Thyroid gland (tissue), 4 donors: ENCODE measurements at regions of chr19 and their contacts with region 1.

Region 1: DNA sequence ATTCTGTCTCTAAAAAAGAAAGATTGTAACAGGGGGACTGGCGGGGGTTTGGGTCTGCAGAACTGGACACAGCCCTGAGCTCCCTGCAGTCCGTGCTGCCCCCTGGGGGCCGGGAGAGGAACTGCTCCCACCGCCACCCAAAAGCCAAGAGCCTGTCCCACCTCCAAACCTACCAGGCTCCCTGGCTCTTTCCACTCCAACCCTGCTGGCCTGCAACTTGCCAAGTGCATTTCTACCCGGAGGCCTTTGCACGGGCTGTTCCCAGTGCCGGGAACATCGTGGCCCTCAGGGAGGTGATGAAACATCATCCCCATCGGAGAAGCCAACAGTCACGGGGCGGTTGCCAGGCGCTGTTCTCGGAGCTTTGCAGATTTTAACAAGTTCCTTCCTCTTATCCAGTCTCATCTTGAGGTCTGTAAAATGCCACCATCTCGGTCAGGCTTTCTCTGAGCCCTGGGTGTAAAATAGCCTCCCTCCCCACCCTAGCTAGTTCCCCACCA is 50.7 kb downstream of the SMIM24 start:
- DNase-seq: peak; percentile 79
- H3K4me3 ChIP-seq: no peak overlapping the region
- H3K27ac ChIP-seq: peak overlapping the region; percentile 45 to 79 (median 66)
- H3K4me1 ChIP-seq: peaks cover 3 to 34% of the 10 kb centered on the region in 2 donors
- H3K27me3 ChIP-seq: no peaks in the 10 kb centered on the region
- CTCF ChIP-seq: peak; percentile 92 to 98 (median 97)
- POLR2A ChIP-seq: peak in 1 of 2 donors; percentile 9

Region 2: DNA sequence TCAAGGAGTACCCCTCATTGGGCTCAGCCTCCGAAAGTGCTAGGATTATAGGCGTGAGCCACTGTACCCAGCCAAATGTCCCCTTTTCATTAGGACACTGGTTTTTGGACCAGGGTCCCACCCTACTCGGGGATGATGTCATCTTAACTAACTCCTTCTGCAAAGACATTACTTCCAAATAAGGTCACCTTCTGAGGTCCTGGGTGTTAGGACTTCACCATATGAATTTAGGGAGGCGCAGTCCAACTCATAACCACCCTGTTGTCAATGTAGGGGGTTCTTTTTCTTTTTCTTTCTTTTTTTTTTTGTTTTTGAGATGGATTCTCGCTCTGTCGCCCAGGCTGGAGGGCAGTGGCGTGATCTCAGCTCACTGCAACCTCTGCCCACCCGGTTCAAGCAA is 96.0 kb before region 1 on chr19:
- intact Hi-C with region 1: loop called (anchors 5 kb)
- DNase-seq: no peak
- H3K4me3 ChIP-seq: no peak overlapping the region
- H3K27ac ChIP-seq: peak overlapping the region in 1 of 3 donors; percentile 26
- H3K4me1 ChIP-seq: peaks cover 34 to 55% of the 10 kb centered on the region in 2 donors
- H3K27me3 ChIP-seq: no peaks in the 10 kb centered on the region
- CTCF ChIP-seq: no peak
- POLR2A ChIP-seq: no peak

Region 3: GRCh38 chr19:3403489-3404323 is 25.9 kb before region 1 on chr19:
- intact Hi-C with region 1: loop called (anchors 2 kb)
- DNase-seq: peak; percentile 96 to 97
- H3K4me3 ChIP-seq: peak overlapping the region in 1 of 3 donors; percentile 9
- H3K27ac ChIP-seq: peak overlapping the region; percentile 99 to 100 (median 100)
- H3K4me1 ChIP-seq: peaks cover 58 to 78% of the 10 kb centered on the region in 2 donors
- H3K27me3 ChIP-seq: no peaks in the 10 kb centered on the region
- CTCF ChIP-seq: no peak
- POLR2A ChIP-seq: peak in 1 of 2 donors; percentile 28

Region 4: DNA sequence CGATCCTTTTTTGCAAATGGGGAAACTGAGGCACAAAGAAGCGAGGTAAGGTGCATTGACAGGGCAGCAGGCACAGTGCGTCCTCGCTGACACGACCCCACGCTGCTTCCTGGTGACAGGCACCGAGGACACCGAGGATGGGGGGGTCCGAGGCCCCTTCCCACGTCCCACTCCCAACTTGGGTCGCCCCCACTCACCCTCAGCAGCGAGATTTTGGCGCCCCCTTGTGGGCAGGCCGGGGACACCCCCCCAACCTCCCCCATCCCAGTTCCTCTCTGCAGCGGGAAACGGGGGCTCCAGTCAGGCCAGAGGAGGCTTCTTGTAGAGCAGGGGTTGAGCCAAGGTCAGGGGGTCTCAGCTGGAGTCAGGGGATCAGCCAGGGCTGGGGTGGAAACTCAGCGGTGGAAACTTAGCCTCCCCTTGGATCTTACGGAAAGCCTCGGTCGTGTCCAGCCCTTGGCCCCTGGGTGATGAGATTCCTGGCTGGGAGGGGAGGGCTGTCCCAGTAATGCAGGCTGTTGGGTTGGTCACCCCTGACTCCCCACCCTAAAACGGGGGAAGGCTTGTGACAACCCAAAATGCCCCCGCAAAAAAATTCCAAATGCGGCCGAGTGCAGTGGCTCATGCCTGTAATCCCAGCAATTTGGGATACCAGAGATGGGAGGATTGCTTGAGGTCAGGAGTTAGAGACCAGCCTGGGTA is 42.5 kb after region 1 on chr19:
- intact Hi-C with region 1: loop called (anchors 5 kb)
- DNase-seq: peak in 1 of 2 donors; percentile 22
- H3K4me3 ChIP-seq: no peak overlapping the region
- H3K27ac ChIP-seq: no peak overlapping the region
- H3K4me1 ChIP-seq: peaks cover 0 to 6% of the 10 kb centered on the region in 2 donors
- H3K27me3 ChIP-seq: no peaks in the 10 kb centered on the region
- CTCF ChIP-seq: peak; percentile 46 to 90 (median 66)
- POLR2A ChIP-seq: no peak